GM18951 (cell line): ENCODE measurements at regions of chrX and their contacts with region 1.

Region 1: GRCh38 chrX:131830400-131831184 is 192.5 kb upstream of the STK26 start:
- POLR2A ChIP-seq: peak; percentile 58

Region 2: DNA sequence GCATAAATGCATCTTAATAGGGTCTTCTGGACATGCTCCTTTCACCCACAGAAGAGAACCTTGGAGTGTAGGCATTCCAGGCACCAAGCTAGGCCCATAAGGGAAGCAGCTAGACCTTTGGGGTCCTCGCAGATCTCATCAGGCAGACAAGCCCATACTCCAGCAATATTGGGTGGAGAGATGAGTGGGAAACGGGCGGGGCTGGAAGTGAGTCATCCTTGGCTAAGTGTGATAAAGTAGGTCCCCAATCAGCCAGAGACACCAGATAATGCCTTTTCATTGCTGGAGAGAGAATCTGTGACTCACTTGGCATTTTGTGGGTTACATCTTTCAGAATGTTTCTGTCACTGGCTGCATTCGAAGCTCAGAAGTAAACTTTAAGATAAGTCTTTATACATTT is 791.5 kb after region 1 on chrX:
- in situ Hi-C with region 1: loop called (anchors 10 kb)
- POLR2A ChIP-seq: no peak